ENCODE measurements at regions of chr2 and their contacts with region 1.

Region 1: GRCh38 chr2:3575534-3576262 is 638 bp downstream of the RPS7 start:
- DNase-seq: peak in 7 of 9 donors; percentile 24 to 52 (median 33)
- ATAC-seq: peak; percentile 41
- H3K4me3 ChIP-seq: peak overlapping the region; percentile 76
- H3K4me3 Mint-ChIP-seq: peak overlapping the region; percentile 77 to 96 (median 90)
- H3K27ac ChIP-seq: peak overlapping the region; percentile 87
- H3K27ac Mint-ChIP-seq: peak overlapping the region; percentile 84 to 97 (median 92)
- H3K4me1 ChIP-seq: peaks cover 14 to 25% of the 10 kb centered on the region in 2 donors
- H3K4me1 Mint-ChIP-seq: peaks cover 25 to 52% (median 42%) of the 10 kb centered on the region in 7 donors
- H3K27me3 ChIP-seq: no peaks in the 10 kb centered on the region
- H3K27me3 Mint-ChIP-seq: no peaks in the 10 kb centered on the region

Region 2: GRCh38 chr2:3361518-3362389 is 213.9 kb before region 1 on chr2:
- CTCF ChIA-PET with region 1: no interaction called
- POLR2A ChIA-PET with region 1: no interaction called
- intact Hi-C with region 1: no loop called
- DNase-seq: no peak
- ATAC-seq: no peak
- H3K4me3 ChIP-seq: no peak overlapping the region
- H3K4me3 Mint-ChIP-seq: peak overlapping the region in 1 of 10 donors; percentile 46
- H3K27ac ChIP-seq: no peak overlapping the region
- H3K27ac Mint-ChIP-seq: peak overlapping the region in 2 of 9 donors; percentile 41 to 64
- H3K4me1 ChIP-seq: no peaks in the 10 kb centered on the region
- H3K4me1 Mint-ChIP-seq: peaks cover 23 to 52% (median 48%) of the 10 kb centered on the region in 7 donors
- H3K27me3 ChIP-seq: no peaks in the 10 kb centered on the region
- H3K27me3 Mint-ChIP-seq: no peaks in the 10 kb centered on the region

Region 3: DNA sequence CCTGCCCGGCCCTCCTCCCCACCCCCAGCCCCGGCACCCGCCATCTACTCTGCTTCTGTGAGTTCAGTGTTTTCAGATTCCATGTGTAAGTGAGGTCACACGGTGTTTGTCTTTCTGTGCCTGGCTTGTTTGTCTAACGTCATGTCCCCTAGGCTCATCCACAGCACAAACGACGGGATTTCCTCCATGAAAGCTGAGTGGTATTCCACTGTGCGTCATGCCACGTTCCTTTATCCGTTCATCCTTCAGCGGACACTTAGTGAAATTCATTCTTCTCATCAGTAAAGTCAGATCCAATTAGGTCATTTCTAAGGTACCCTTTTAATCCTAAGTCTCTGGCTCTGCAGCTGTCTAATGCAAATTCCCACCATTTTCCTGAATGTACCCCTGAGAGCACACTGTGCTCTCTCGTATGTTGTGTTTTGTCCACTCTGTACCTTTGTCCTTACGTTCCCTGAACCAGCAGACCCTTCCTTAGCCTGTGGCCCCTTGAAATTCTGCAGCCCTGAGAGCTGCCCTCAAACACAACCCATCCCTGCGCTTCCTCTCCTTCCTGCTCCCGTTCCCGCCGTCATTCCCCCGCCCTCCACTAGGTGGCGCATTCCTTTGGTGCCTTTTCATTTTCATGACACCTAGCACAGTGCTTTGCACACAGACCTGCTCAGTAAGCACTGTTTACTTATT is 152.1 kb before region 1 on chr2:
- CTCF ChIA-PET with region 1: no interaction called
- POLR2A ChIA-PET with region 1: no interaction called
- intact Hi-C with region 1: no loop called
- DNase-seq: peak; percentile 46 to 82 (median 61)
- ATAC-seq: peak; percentile 85
- H3K4me3 ChIP-seq: no peak overlapping the region
- H3K4me3 Mint-ChIP-seq: no peak overlapping the region
- H3K27ac ChIP-seq: no peak overlapping the region
- H3K27ac Mint-ChIP-seq: peak overlapping the region in 6 of 9 donors; percentile 33 to 85 (median 66)
- H3K4me1 ChIP-seq: no peaks in the 10 kb centered on the region
- H3K4me1 Mint-ChIP-seq: peaks cover 0 to 13% (median 6%) of the 10 kb centered on the region in 7 donors
- H3K27me3 ChIP-seq: no peaks in the 10 kb centered on the region
- H3K27me3 Mint-ChIP-seq: no peaks in the 10 kb centered on the region

Region 4: GRCh38 chr2:3563521-3563976 is 12.1 kb before region 1 on chr2:
- CTCF ChIA-PET with region 1: no interaction called
- POLR2A ChIA-PET with region 1: interaction called, 55 read pairs
- intact Hi-C with region 1: loop called (anchors 1 kb)
- DNase-seq: no peak
- ATAC-seq: no peak
- H3K4me3 ChIP-seq: no peak overlapping the region
- H3K4me3 Mint-ChIP-seq: no peak overlapping the region
- H3K27ac ChIP-seq: no peak overlapping the region
- H3K27ac Mint-ChIP-seq: peak overlapping the region in 1 of 9 donors; percentile 19
- H3K4me1 ChIP-seq: peaks cover 4 to 7% of the 10 kb centered on the region in 2 donors
- H3K4me1 Mint-ChIP-seq: peaks cover 3 to 16% (median 9%) of the 10 kb centered on the region in 7 donors
- H3K27me3 ChIP-seq: no peaks in the 10 kb centered on the region
- H3K27me3 Mint-ChIP-seq: no peaks in the 10 kb centered on the region

Region 5: DNA sequence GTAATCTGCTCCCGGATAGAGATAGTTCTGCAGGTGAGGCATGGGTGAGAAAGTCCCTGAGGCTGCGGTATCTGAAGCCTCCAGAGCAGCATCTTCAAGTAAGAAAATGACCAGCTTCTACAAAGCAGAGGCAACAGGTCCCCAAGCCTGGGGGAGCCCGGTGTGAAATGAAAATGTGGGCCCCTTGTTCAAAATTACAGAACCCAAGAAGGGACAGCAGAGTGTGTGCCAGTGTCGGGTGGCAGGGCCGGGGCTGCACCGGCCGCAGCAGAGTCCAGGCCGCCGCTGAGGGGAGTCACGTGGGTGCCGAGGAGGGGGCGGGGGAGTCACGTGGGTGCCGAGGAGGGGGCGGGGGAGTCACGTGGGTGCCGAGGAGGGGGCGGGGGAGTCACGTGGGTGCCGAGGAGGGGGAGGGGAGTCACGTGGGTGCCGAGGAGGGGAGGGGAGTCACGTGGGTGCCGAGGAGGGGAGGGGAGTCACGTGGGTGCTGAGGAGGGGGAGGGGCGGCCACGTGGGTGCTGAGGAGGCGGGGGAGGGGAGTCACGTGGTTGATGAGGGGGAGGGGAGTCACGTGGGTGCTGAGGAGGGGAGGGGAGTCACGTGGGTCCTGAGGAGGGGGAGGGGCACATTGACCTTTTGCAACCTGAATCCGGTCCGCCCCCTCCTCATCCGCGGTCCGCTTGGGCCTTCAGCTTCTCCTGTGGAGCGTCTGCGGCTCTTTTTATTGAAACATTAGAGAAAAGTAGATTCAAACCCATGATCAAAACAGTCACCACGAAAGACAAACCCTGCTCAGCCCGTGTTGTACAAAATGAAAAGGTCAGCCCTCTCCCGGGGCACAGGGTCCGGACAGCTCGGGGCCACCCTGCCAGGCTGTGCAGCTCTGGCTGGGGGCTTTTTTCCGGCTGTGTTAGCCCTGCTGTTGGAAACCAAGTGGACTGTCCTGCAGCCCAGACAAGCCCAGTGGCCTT is 29.6 kb after region 1 on chr2:
- CTCF ChIA-PET with region 1: no interaction called
- POLR2A ChIA-PET with region 1: interaction called, 3 read pairs
- intact Hi-C with region 1: loop called in 1 of 2 experiments (anchors 1 kb)
- DNase-seq: peak in 7 of 9 donors; percentile 11 to 65 (median 48)
- ATAC-seq: no peak
- H3K4me3 ChIP-seq: no peak overlapping the region
- H3K4me3 Mint-ChIP-seq: peak overlapping the region in 7 of 10 donors; percentile 18 to 84 (median 75)
- H3K27ac ChIP-seq: no peak overlapping the region
- H3K27ac Mint-ChIP-seq: peak overlapping the region in 6 of 9 donors; percentile 8 to 94 (median 88)
- H3K4me1 ChIP-seq: peaks cover 0 to 6% of the 10 kb centered on the region in 2 donors
- H3K4me1 Mint-ChIP-seq: peaks cover 2 to 35% (median 5%) of the 10 kb centered on the region in 7 donors
- H3K27me3 ChIP-seq: no peaks in the 10 kb centered on the region
- H3K27me3 Mint-ChIP-seq: no peaks in the 10 kb centered on the region

Region 6: DNA sequence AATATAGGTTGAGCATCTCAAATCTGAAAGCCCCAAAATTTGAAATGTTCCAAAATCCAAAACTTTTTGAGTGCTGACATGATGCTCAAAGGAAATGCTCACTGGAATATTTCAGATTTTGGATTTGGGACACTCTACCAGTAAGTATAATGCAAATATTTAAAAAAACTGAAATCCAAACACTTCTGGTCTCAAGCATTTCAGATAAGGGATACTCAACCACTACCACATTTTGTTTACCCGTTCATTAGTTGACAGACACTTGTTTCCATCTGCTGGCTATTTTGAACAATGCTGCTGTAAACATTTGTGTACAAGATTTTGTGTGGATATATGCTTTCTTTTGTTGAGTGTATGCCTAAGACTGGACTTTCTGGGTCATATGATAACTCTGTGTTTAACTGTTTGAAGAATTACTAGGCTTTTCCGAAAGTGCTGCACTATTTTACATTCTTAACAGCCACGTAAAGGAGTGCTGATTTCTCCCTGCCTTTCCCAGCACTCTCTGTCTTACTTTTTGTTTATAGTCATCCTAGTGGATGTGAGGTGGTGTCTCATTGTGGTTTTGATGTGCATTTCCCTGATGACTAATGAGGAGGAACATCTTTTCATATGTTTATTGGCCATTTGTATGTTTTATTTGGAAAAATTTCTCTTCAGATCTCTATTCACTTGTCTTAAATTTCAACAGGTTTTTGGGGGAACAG is 108.2 kb after region 1 on chr2:
- CTCF ChIA-PET with region 1: no interaction called
- POLR2A ChIA-PET with region 1: no interaction called
- intact Hi-C with region 1: no loop called
- DNase-seq: no peak
- ATAC-seq: no peak
- H3K4me3 ChIP-seq: no peak overlapping the region
- H3K4me3 Mint-ChIP-seq: no peak overlapping the region
- H3K27ac ChIP-seq: no peak overlapping the region
- H3K27ac Mint-ChIP-seq: no peak overlapping the region
- H3K4me1 ChIP-seq: no peaks in the 10 kb centered on the region
- H3K4me1 Mint-ChIP-seq: no peaks in the 10 kb centered on the region
- H3K27me3 ChIP-seq: no peaks in the 10 kb centered on the region
- H3K27me3 Mint-ChIP-seq: peaks cover 6 to 22% (median 15%) of the 10 kb centered on the region in 5 donors

Region 7: DNA sequence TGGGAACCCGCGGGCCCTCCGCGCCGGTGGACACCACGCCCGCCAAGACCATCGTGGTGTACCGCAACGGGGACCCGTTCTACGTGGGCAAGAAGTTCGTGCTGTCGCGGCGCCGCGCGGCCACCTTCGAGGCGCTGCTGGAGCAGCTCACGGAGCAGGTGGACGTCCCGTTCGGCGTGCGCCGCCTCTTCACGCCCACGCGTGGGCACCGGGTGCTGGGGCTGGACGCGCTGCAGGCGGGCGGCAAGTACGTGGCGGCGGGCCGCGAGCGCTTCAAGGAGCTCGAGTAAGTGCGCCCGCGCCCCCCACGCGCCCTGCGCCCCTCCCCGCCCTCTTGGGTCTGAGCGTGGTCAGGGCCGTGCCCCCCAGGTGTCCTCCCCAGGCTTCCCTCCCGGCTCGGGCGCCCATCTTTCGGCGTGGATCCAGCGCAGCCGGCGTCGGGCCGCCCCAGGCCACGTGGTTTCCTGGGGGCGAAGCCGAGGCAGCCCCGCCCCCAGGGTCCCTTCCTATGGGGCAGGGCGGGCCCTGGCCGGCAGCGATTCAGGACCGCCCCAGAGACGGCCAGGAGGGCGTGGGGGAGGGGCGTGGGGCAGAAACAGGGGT is 128.2 kb after region 1 on chr2:
- CTCF ChIA-PET with region 1: no interaction called
- POLR2A ChIA-PET with region 1: no interaction called
- intact Hi-C with region 1: no loop called
- DNase-seq: no peak
- ATAC-seq: no peak
- H3K4me3 ChIP-seq: no peak overlapping the region
- H3K4me3 Mint-ChIP-seq: no peak overlapping the region
- H3K27ac ChIP-seq: no peak overlapping the region
- H3K27ac Mint-ChIP-seq: no peak overlapping the region
- H3K4me1 ChIP-seq: no peaks in the 10 kb centered on the region
- H3K4me1 Mint-ChIP-seq: peaks cover 0 to 7% (median 5%) of the 10 kb centered on the region in 7 donors
- H3K27me3 ChIP-seq: peaks cover 0 to 4% of the 10 kb centered on the region in 2 donors
- H3K27me3 Mint-ChIP-seq: peaks cover 23 to 68% (median 45%) of the 10 kb centered on the region in 5 donors

Measured in naive thymus-derived CD4-positive, alpha-beta T cell (primary cell).